ENCODE measurements at regions of chr7 and their contacts with region 1.

Region 1: GRCh38 chr7:133207687-133208086 is 45.2 kb upstream of the EXOC4 start:
- DNase-seq: no peak
- H3K4me3 ChIP-seq: no peak overlapping the region
- H3K27ac ChIP-seq: no peak overlapping the region
- H3K4me1 ChIP-seq: peaks cover 0 to 8% (median 2%) of the 10 kb centered on the region in 4 experiments; a peak in 3 of 7 replicates
- H3K27me3 ChIP-seq: no peaks in the 10 kb centered on the region
- CTCF ChIP-seq: peak in 2 of 3 experiments; percentile 41 to 64; a peak in 2 of 4 replicates
- EP300 ChIP-seq: no peak
- POLR2A ChIP-seq: no peak
- RAD21 ChIP-seq: peak; percentile 68 to 69

Region 2: GRCh38 chr7:133191787-133192186 is 15.9 kb before region 1 on chr7:
- CTCF ChIA-PET with region 1: interaction called, 12 read pairs
- POLR2A ChIA-PET with region 1: interaction called, 4 read pairs
- DNase-seq: no peak
- H3K4me3 ChIP-seq: no peak overlapping the region
- H3K27ac ChIP-seq: no peak overlapping the region
- H3K4me1 ChIP-seq: peaks cover under 1 to 13% (median 9%) of the 10 kb centered on the region in 4 experiments; a peak in 5 of 7 replicates
- H3K27me3 ChIP-seq: no peaks in the 10 kb centered on the region
- CTCF ChIP-seq: no peak
- EP300 ChIP-seq: no peak
- POLR2A ChIP-seq: no peak
- RAD21 ChIP-seq: no peak

Region 3: GRCh38 chr7:133196856-133197612 is 10.7 kb before region 1 on chr7:
- CTCF ChIA-PET with region 1: interaction called, 12 read pairs
- POLR2A ChIA-PET with region 1: interaction called, 4 read pairs
- DNase-seq: peak; percentile 58 to 62
- H3K4me3 ChIP-seq: peak overlapping the region in 3 of 4 experiments; percentile 15 to 42 (median 26); a peak in 6 of 8 replicates
- H3K27ac ChIP-seq: peak overlapping the region; percentile 36; the same call in 1 of the 2 replicates
- H3K4me1 ChIP-seq: peaks cover 3 to 17% (median 10%) of the 10 kb centered on the region in 4 experiments
- H3K27me3 ChIP-seq: no peaks in the 10 kb centered on the region
- CTCF ChIP-seq: no peak
- EP300 ChIP-seq: 0 out of 3 replicates have a peak, but pooled peaks of 1 of the 2 experiments have one; percentile 50
- POLR2A ChIP-seq: no peak
- RAD21 ChIP-seq: no peak

Region 4: DNA sequence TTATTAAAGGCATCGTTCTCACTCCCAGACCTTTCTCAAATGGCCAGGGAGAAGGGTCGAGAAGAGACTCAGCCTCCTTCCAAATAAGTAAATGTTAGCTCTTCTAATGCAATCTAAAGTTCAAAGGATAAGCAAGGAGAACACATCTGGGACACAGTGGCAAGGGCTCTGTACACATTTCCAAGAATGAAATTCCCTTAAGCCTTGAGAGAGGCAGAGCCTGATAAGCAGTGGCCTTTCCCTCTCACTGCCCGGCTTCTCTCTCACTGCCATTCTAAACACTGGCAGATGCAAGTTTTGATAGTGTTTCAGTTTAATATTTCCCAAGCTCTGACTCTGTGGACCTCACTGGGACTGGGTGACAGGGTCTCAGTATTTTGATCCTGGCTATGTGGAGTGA is 10.1 kb after region 1 on chr7:
- CTCF ChIA-PET with region 1: interaction called, 14 read pairs
- POLR2A ChIA-PET with region 1: no interaction called
- DNase-seq: no peak
- H3K4me3 ChIP-seq: no peak overlapping the region
- H3K27ac ChIP-seq: no peak overlapping the region
- H3K4me1 ChIP-seq: no peaks in the 10 kb centered on the region
- H3K27me3 ChIP-seq: no peaks in the 10 kb centered on the region
- CTCF ChIP-seq: no peak
- EP300 ChIP-seq: no peak
- POLR2A ChIP-seq: no peak
- RAD21 ChIP-seq: no peak

Measured in H1 (cell line).